Naive thymus-derived CD4-positive, alpha-beta T cell (primary cell): ENCODE measurements at regions of chr22 and their contacts with region 1.

Region 1: GRCh38 chr22:19970479-19971275 is 29.1 kb upstream of the TXNRD2 start:
- DNase-seq: peak; percentile 59 to 83 (median 73)
- ATAC-seq: peak; percentile 81
- H3K4me3 ChIP-seq: no peak overlapping the region
- H3K4me3 Mint-ChIP-seq: peak overlapping the region in 1 of 10 donors; percentile 52
- H3K27ac ChIP-seq: no peak overlapping the region
- H3K27ac Mint-ChIP-seq: peak overlapping the region in 2 of 9 donors; percentile 41
- H3K4me1 ChIP-seq: peaks cover 7 to 11% of the 10 kb centered on the region in 2 donors
- H3K4me1 Mint-ChIP-seq: peaks cover 12 to 35% (median 13%) of the 10 kb centered on the region in 7 donors
- H3K27me3 ChIP-seq: no peaks in the 10 kb centered on the region
- H3K27me3 Mint-ChIP-seq: no peaks in the 10 kb centered on the region

Region 2: GRCh38 chr22:20027966-20028854 is 57.5 kb after region 1 on chr22:
- CTCF ChIA-PET with region 1: interaction called, 4 read pairs
- POLR2A ChIA-PET with region 1: no interaction called
- intact Hi-C with region 1: loop called (anchors 1 kb)
- DNase-seq: peak in 1 of 9 donors; percentile 25
- ATAC-seq: no peak
- H3K4me3 ChIP-seq: no peak overlapping the region
- H3K4me3 Mint-ChIP-seq: no peak overlapping the region
- H3K27ac ChIP-seq: no peak overlapping the region
- H3K27ac Mint-ChIP-seq: no peak overlapping the region
- H3K4me1 ChIP-seq: peaks cover 11 to 13% of the 10 kb centered on the region in 2 donors
- H3K4me1 Mint-ChIP-seq: peaks cover 13 to 62% (median 34%) of the 10 kb centered on the region in 7 donors
- H3K27me3 ChIP-seq: no peaks in the 10 kb centered on the region
- H3K27me3 Mint-ChIP-seq: no peaks in the 10 kb centered on the region

Region 3: DNA sequence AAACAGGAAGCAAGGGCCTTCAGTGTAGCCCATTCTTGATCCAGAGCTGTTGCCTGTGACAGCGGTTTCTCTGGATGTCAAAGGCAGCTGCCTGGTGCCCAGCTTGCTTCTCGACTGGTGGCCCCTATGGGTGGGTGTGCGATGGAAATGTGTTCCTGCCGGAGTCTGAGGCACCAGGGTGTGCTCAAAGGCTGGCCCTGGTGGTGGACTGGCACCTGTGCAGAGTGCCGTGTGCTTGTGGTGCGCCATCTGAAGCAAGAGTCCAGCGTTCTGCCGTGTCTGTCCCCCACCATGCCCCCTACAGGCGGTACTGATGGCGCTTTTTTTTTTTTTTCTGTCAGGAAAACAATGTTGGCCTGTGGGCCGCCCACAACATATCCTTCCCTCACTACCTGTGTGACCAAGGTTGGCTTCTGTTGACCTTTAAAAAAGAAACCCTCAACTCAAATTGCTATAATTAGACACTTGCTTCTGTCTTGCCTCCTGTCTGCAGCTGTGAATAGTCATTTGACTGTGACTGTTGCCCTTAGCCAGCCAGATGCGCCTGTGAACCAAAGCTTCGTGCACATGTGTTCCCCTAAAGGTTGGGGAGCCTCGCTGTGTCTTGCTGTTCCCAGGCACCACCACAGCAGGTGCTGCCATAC is 140.5 kb after region 1 on chr22:
- CTCF ChIA-PET with region 1: no interaction called
- POLR2A ChIA-PET with region 1: no interaction called
- intact Hi-C with region 1: loop called (anchors 1 to 5 kb)
- DNase-seq: peak in 2 of 9 donors; percentile 17 to 24
- ATAC-seq: peak; percentile 70
- H3K4me3 ChIP-seq: no peak overlapping the region
- H3K4me3 Mint-ChIP-seq: no peak overlapping the region
- H3K27ac ChIP-seq: peak overlapping the region; percentile 50
- H3K27ac Mint-ChIP-seq: peak overlapping the region; percentile 28 to 88 (median 64)
- H3K4me1 ChIP-seq: peaks cover 11 to 17% of the 10 kb centered on the region in 2 donors
- H3K4me1 Mint-ChIP-seq: peaks cover 8 to 29% (median 13%) of the 10 kb centered on the region in 7 donors
- H3K27me3 ChIP-seq: no peaks in the 10 kb centered on the region
- H3K27me3 Mint-ChIP-seq: no peaks in the 10 kb centered on the region